Activated T-helper 2 cell treated with anti-CD3 and anti-CD28 coated beads, Interferon-gamma antibody, Interleukin-2, Interleukin-4, amounts not matched to agents 10 μg/mL and 5 μg/mL and 100 μg/mL, durations not matched to agents 14 hours and 24 hours and 36 hours (primary cell): ENCODE measurements at regions of chr2 and their contacts with region 1.

Region 1: GRCh38 chr2:174748948-174749347 is 15.3 kb downstream of the CHRNA1 start:
- DNase-seq: peak; percentile 55
- H3K4me3 Mint-ChIP-seq: no peak overlapping the region
- H3K27ac Mint-ChIP-seq: no peak overlapping the region
- H3K4me1 Mint-ChIP-seq: peaks cover 29% of the 10 kb centered on the region
- H3K27me3 Mint-ChIP-seq: peaks cover 9% of the 10 kb centered on the region

Region 2: DNA sequence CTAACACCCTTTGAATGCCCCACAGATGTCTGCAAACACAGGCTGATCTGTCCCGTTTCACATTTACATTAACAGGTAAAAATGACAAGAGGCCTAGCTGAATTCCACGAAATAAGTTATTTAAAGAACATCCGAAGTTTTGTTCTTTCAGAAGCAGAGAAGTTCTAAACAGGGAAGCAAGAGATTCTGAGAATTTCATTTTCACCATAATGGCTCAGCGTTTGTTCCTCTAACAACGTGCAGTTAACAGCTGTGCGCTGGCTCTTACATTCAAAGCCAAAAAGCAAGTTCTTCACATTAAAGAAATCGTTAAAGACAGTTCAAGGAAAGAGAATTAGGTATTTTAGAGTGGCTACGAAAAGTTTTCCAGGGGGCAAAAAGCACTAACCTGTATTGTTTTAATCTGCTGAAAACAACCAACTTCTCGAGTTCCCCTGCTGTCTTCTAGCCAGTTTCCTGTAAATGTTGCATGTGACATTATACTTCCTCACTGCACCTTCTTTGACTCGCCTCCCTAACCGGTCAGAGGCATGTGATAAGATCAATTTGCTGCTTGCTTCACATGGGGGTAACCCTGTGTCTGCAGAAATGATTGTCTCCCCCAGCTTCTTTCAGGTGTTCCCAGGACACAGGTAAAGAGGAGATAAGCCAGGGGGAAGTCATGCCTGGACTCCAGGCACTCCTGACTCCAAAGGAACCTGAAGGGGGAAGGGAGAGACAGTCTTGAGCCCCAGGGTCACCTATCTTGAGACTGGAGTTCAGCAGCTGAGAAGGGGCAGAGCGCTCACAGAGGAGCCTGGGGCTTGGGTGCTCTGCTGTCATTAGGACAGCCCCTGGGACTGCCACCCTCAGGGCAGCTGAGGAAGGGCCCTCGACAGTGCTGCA is 114.6 kb before region 1 on chr2:
- intact Hi-C with region 1: loop called (anchors 2 kb)
- DNase-seq: peak; percentile 38
- H3K4me3 Mint-ChIP-seq: peak overlapping the region; percentile 90
- H3K27ac Mint-ChIP-seq: peak overlapping the region; percentile 92
- H3K4me1 Mint-ChIP-seq: peaks cover 69% of the 10 kb centered on the region
- H3K27me3 Mint-ChIP-seq: no peaks in the 10 kb centered on the region

Region 3: GRCh38 chr2:174717273-174717672 is 31.7 kb before region 1 on chr2:
- intact Hi-C with region 1: loop called (anchors 1 kb)
- DNase-seq: peak; percentile 29
- H3K4me3 Mint-ChIP-seq: peak overlapping the region; percentile 11
- H3K27ac Mint-ChIP-seq: peak overlapping the region; percentile 30
- H3K4me1 Mint-ChIP-seq: peaks cover 25% of the 10 kb centered on the region
- H3K27me3 Mint-ChIP-seq: peaks cover 6% of the 10 kb centered on the region

Region 4: GRCh38 chr2:174797781-174798276 is 48.9 kb after region 1 on chr2:
- intact Hi-C with region 1: loop called (anchors 1 kb)
- DNase-seq: no peak
- H3K4me3 Mint-ChIP-seq: no peak overlapping the region
- H3K27ac Mint-ChIP-seq: no peak overlapping the region
- H3K4me1 Mint-ChIP-seq: peaks cover 38% of the 10 kb centered on the region
- H3K27me3 Mint-ChIP-seq: no peaks in the 10 kb centered on the region

Region 5: GRCh38 chr2:174844295-174844708 is 95.4 kb after region 1 on chr2:
- intact Hi-C with region 1: loop called (anchors 2 kb)
- DNase-seq: no peak
- H3K4me3 Mint-ChIP-seq: no peak overlapping the region
- H3K27ac Mint-ChIP-seq: no peak overlapping the region
- H3K4me1 Mint-ChIP-seq: peaks cover 21% of the 10 kb centered on the region
- H3K27me3 Mint-ChIP-seq: peaks cover 3% of the 10 kb centered on the region

Region 6: DNA sequence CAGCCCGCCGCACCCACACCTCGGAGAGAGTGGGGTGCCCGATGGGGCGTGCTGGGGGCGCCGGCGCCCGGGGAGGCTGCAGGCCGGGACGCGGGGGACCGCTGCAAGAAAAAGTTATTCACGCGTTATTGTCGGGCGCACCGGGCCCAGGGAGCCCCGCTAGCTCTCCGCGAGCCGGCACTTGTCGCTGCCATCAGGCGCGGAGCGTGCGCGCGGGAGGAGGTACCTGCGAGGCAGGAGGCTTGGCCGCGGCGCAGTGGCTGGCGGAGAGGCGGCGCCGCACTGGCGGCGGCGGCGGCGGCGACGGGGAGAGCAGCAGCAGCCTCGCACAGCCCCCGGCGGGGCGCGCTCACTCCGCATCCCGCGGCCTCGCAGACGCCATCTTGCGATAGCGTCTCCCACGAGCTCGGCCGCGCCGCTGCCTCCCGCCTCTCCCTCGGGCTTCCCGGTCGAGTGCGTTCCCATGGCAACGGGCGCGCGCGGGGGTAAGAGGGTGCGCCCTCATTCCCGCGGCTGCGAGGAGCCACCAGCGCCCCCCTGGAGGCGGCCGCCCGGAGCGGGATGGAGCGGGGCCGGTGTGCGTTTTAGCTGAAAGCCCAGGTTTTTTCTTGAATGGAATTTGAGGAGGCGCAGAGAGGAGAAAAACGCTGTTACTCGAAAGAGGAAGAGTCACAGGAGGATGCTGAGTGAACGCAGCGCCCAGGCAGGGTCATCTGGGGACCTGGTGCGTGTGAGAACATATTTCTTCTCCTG is 256.2 kb after region 1 on chr2 and contains the start of gene CHN1:
- intact Hi-C with region 1: loop called (anchors 5 kb)
- DNase-seq: peak; percentile 46
- H3K4me3 Mint-ChIP-seq: peak within 1 kb of the TSS; percentile 80
- H3K27ac Mint-ChIP-seq: no peak within 1 kb of the TSS
- H3K4me1 Mint-ChIP-seq: peaks cover 2% of the 10 kb centered on the region
- H3K27me3 Mint-ChIP-seq: peaks cover 69% of the 10 kb centered on the region
- total RNA-seq, gene CHN1: 5.0 and 7.3 TPM in 2 replicates